AG04449 (cell line): ENCODE measurements at regions of chr6 and their contacts with region 1.

Region 1: GRCh38 chr6:138817822-138818308 is 22.0 kb downstream of the ECT2L start:
- DNase-seq: peak; percentile 51
- H3K4me3 ChIP-seq: no peak overlapping the region
- CTCF ChIP-seq: no peak

Region 2: GRCh38 chr6:138805016-138805765 is 12.7 kb before region 1 on chr6:
- CTCF ChIA-PET with region 1: interaction called, 25 read pairs
- POLR2A ChIA-PET with region 1: no interaction called
- DNase-seq: no peak
- H3K4me3 ChIP-seq: no peak overlapping the region
- CTCF ChIP-seq: no peak